ENCODE measurements at regions of chr6 and their contacts with region 1.

Region 1: DNA sequence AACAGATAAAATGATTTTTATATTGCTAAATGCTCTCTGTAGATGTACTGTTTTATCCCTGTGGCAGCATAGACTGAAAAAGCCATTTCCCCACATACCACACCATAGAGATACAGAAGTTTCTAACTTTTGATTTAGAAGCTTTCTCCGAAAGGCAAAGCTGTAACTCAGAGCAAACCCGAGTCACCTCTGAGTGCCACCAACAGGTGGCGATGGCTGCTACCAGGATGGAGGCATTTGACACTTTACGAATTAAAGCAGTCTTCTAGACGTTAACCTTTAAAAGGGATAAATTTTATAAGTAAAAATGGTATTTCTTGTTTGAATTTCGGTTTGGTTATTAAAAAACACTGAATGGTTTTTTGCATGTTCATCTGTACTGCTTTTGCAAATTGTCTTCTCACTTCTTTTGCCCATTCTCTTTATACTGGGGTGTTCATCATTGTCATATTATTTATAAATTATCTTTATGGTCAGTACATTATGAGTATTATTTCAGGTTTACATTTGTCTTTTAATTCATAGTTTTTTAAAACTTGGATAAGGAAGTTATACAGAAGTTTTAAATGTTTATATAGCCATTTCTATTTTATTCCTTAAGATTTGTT is 201.0 kb upstream of the CEP162 start:
- DNase-seq: peak; percentile 52
- ATAC-seq: no peak
- H3K4me3 Mint-ChIP-seq: no peak overlapping the region
- H3K27ac Mint-ChIP-seq: no peak overlapping the region
- H3K4me1 Mint-ChIP-seq: no peaks in the 10 kb centered on the region
- H3K27me3 Mint-ChIP-seq: peaks cover 3% of the 10 kb centered on the region

Region 2: DNA sequence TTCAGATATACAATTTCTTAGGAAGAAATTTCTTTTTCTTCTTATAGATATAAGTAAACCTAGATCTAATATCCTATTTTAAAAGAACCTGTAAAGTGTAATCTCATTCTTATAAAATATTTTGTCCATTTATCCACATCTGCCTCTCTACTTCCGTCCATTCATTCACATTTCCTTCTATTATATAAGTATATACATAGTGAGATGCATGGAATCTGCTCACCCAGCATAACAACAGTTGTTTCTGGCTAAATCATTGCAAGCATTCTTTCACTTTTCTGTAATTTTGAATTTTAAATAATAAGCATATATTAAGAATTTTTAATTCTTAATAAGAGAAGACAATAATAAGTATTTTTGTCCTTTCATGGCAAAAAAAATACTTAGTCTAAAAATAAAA is 246.4 kb before region 1 on chr6:
- CTCF ChIA-PET with region 1: no interaction called
- POLR2A ChIA-PET with region 1: no interaction called
- intact Hi-C with region 1: no loop called
- DNase-seq: no peak
- ATAC-seq: no peak
- H3K4me3 Mint-ChIP-seq: no peak overlapping the region
- H3K27ac Mint-ChIP-seq: no peak overlapping the region
- H3K4me1 Mint-ChIP-seq: no peaks in the 10 kb centered on the region
- H3K27me3 Mint-ChIP-seq: no peaks in the 10 kb centered on the region

Region 3: GRCh38 chr6:84685983-84686584 is 257.7 kb after region 1 on chr6:
- CTCF ChIA-PET with region 1: no interaction called
- POLR2A ChIA-PET with region 1: no interaction called
- intact Hi-C with region 1: loop called in 1 of 2 experiments (anchors 5 kb)
- DNase-seq: peak; percentile 20
- ATAC-seq: no peak
- H3K4me3 Mint-ChIP-seq: no peak overlapping the region
- H3K27ac Mint-ChIP-seq: no peak overlapping the region
- H3K4me1 Mint-ChIP-seq: no peaks in the 10 kb centered on the region
- H3K27me3 Mint-ChIP-seq: no peaks in the 10 kb centered on the region

Region 4: DNA sequence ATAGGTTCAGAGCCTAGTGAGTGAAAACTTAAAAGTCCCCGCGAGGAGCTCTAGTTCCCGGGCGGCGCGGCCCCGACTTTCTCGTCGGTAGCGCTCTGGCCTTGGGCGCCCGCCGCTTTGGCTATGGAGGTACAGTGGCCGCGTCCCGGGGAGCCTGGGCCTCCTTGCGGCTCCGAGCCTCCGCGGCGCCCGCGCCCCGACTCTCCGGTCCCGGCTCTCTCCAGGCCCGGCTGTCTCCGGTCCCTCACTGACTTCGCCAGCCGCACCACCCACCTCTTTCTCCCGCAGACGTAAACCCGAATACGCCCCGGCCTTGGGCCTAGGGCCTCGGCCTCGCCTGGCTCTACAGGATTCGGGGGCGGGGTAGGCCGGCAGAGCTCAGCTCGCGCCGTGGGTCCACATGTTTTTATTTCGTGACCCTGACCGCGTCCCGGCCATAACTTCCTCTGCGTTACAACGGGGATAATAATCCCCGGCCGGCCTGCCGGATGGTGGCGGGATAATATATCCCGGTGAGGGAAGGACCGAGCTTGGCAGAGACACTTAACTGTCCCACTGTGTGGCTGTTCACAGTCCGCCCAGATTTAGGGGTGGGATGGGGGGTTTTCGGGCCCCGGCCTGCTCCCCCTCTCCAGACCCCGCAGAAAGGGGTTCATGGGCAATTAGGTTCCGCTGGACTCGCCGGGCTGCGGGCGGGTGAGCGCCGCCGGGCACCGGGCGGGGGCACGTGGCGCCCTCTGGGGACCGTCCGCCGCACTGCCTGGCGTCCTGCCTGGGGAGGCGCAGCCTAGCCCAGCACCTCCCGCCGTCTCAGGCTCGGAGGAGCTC is 346.0 kb after region 1 on chr6:
- CTCF ChIA-PET with region 1: no interaction called
- POLR2A ChIA-PET with region 1: no interaction called
- intact Hi-C with region 1: loop called in 1 of 2 experiments (anchors 10 kb)
- DNase-seq: peak; percentile 56
- ATAC-seq: peak; percentile 85
- H3K4me3 Mint-ChIP-seq: no peak overlapping the region
- H3K27ac Mint-ChIP-seq: no peak overlapping the region
- H3K4me1 Mint-ChIP-seq: peaks cover 3% of the 10 kb centered on the region
- H3K27me3 Mint-ChIP-seq: peaks cover 56% of the 10 kb centered on the region